ENCODE measurements at regions of chr7 and their contacts with region 1.

Region 1: GRCh38 chr7:122299624-122300210 is 4.8 kb downstream of the FEZF1 start:
- DNase-seq: no peak
- ATAC-seq: peak; percentile 16; the same call in 1 of the 3 replicates
- H3K4me3 ChIP-seq: no peak overlapping the region
- H3K27ac ChIP-seq: no peak overlapping the region
- H3K4me1 ChIP-seq: peaks cover 0 to 16% of the 10 kb centered on the region in 2 experiments; a peak in 1 of 5 replicates
- H3K27me3 ChIP-seq: peaks cover 30 to 41% of the 10 kb centered on the region in 2 experiments; a peak in 4 of 5 replicates
- CTCF ChIP-seq: no peak
- EP300 ChIP-seq: no peak
- POLR2A ChIP-seq: no peak
- RAD21 ChIP-seq: no peak

Region 2: GRCh38 chr7:120709972-120710320 is 1589.8 kb before region 1 on chr7:
- CTCF ChIA-PET with region 1: no interaction called
- POLR2A ChIA-PET with region 1: no interaction called
- in situ Hi-C with region 1: no loop called
- intact Hi-C with region 1: loop called (anchors 10 kb)
- DNase-seq: no peak
- ATAC-seq: no peak
- H3K4me3 ChIP-seq: no peak overlapping the region
- H3K27ac ChIP-seq: no peak overlapping the region
- H3K4me1 ChIP-seq: no peaks in the 10 kb centered on the region
- H3K27me3 ChIP-seq: no peaks in the 10 kb centered on the region
- CTCF ChIP-seq: no peak
- EP300 ChIP-seq: no peak
- POLR2A ChIP-seq: no peak
- RAD21 ChIP-seq: no peak